Endothelial cell of umbilical vein (primary cell): ENCODE measurements at regions of chr6 and their contacts with region 1.

Region 1: GRCh38 chr6:139568956-139569548 is 194.6 kb upstream of the CITED2 start:
- DNase-seq: peak; percentile 80
- H3K4me3 ChIP-seq: peak overlapping the region in 1 of 3 experiments; percentile 22
- H3K27ac ChIP-seq: peak overlapping the region; percentile 81
- H3K4me1 ChIP-seq: peaks cover 24% of the 10 kb centered on the region
- H3K27me3 ChIP-seq: no peaks in the 10 kb centered on the region
- CTCF ChIP-seq: no peak
- POLR2A ChIP-seq: no peak

Region 2: DNA sequence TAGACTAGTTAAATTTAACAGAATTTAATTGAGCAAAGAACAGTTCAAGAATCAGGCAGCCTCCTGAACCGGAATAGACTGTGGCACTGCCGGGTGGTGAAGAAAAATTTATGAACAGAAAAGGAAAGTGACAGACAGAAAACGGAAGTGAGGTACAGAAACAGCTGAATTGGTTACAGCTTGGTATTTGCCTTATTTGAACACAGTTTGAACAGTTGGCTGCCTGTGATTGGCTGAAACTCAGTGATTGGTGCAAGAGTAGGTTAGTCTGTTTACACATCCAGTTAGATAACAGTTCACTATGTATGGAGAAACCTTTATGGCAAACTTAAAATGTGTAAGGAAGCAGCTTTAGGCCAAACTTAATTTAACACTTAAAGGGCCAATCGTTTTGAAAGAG is 78.6 kb before region 1 on chr6:
- CTCF ChIA-PET with region 1: no interaction called
- POLR2A ChIA-PET with region 1: no interaction called
- dilution Hi-C with region 1: no loop called
- intact Hi-C with region 1: no loop called
- DNase-seq: peak; percentile 16
- H3K4me3 ChIP-seq: no peak overlapping the region
- H3K27ac ChIP-seq: no peak overlapping the region
- H3K4me1 ChIP-seq: no peaks in the 10 kb centered on the region
- H3K27me3 ChIP-seq: no peaks in the 10 kb centered on the region
- CTCF ChIP-seq: no peak
- POLR2A ChIP-seq: no peak

Region 3: GRCh38 chr6:139539852-139540251 is 29.2 kb before region 1 on chr6:
- CTCF ChIA-PET with region 1: interaction called, 3 read pairs
- POLR2A ChIA-PET with region 1: no interaction called
- dilution Hi-C with region 1: no loop called
- intact Hi-C with region 1: loop called (anchors 2 kb)
- DNase-seq: peak; percentile 13
- H3K4me3 ChIP-seq: no peak overlapping the region
- H3K27ac ChIP-seq: peak overlapping the region; percentile 24
- H3K4me1 ChIP-seq: peaks cover 29% of the 10 kb centered on the region
- H3K27me3 ChIP-seq: no peaks in the 10 kb centered on the region
- CTCF ChIP-seq: no peak
- POLR2A ChIP-seq: no peak